Mammary epithelial cell (primary cell): ENCODE measurements at regions of chrX and their contacts with region 1.

Region 1: GRCh38 chrX:15564981-15565579 is 35.7 kb downstream of the ACE2 start:
- DNase-seq: peak; percentile 80
- H3K4me3 ChIP-seq: no peak overlapping the region
- H3K27ac ChIP-seq: peak overlapping the region; percentile 20
- H3K4me1 ChIP-seq: peaks cover 6% of the 10 kb centered on the region
- H3K27me3 ChIP-seq: no peaks in the 10 kb centered on the region
- CTCF ChIP-seq: peak; percentile 91 to 95

Region 2: DNA sequence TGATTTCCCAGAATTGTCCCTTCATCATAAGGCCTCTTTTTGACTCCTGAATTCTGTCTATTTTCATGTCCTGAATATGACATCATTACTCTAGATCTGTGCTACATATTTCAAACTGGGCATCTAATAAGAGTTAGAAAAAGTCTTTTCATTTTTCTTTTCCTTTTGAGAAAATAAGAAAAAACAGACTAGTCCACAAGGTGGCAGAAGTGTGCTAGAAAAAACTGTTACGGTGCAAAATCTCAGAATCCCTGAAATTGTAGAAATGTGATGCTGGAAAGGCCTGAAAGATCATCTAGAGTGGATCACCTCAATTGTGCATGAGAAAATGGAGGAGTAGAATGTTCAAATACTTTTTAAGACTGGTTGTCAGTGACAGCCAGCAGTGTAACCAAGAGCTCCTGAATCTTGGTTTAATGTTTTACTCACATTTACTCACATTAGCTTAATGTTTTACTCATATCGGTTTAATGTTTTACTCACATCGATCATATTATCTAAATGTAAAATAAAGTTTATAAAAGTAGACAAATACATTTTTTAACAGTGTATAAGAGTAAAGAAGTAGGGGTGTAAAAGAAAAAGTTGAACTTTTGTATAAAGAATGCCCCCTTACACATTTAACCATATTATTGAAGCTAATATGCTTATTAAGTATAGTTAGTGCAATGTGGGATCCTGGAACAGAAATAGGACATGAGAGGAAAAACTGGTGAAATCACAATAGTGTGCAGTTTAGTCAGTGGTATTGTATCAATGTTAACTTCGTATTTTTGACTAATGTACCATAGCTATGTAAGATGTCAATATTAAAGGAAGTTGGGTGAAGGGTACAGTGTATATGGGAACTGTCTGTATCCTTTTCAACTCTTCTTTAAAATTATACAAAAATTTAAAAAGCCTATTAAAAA is 264.9 kb before region 1 on chrX:
- CTCF ChIA-PET with region 1: no interaction called
- dilution Hi-C with region 1: no loop called
- in situ Hi-C with region 1: no loop called
- intact Hi-C with region 1: loop called (anchors 1 kb)
- DNase-seq: no peak
- H3K4me3 ChIP-seq: no peak overlapping the region
- H3K27ac ChIP-seq: no peak overlapping the region
- H3K4me1 ChIP-seq: no peaks in the 10 kb centered on the region
- H3K27me3 ChIP-seq: no peaks in the 10 kb centered on the region
- CTCF ChIP-seq: peak; percentile 53 to 57

Region 3: DNA sequence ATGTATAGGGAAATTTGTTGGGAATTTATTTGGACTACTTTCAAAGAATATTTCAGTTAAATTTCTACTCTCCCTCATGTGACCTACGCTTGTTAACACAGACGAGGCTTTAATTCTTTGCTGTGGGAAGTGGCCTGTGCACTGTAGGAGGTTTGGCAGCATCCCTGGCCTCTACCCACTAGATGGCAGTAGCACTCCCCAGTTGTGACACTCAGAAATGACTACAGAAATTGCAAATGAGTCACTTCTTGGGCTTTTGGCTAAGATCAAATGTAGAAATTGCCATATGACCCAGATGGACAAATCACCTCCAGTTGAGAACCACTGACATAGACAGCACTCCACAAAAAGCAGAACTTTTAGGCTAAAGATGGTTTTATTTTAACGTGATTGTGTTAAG is 94.1 kb before region 1 on chrX:
- CTCF ChIA-PET with region 1: interaction called, 3 read pairs
- dilution Hi-C with region 1: no loop called
- in situ Hi-C with region 1: loop called in 1 of 2 experiments (anchors 5 kb)
- intact Hi-C with region 1: loop called (anchors 1 kb)
- DNase-seq: peak; percentile 68
- H3K4me3 ChIP-seq: no peak overlapping the region
- H3K27ac ChIP-seq: peak overlapping the region; percentile 40
- H3K4me1 ChIP-seq: peaks cover 33% of the 10 kb centered on the region
- H3K27me3 ChIP-seq: no peaks in the 10 kb centered on the region
- CTCF ChIP-seq: peak; percentile 89 to 90

Region 4: DNA sequence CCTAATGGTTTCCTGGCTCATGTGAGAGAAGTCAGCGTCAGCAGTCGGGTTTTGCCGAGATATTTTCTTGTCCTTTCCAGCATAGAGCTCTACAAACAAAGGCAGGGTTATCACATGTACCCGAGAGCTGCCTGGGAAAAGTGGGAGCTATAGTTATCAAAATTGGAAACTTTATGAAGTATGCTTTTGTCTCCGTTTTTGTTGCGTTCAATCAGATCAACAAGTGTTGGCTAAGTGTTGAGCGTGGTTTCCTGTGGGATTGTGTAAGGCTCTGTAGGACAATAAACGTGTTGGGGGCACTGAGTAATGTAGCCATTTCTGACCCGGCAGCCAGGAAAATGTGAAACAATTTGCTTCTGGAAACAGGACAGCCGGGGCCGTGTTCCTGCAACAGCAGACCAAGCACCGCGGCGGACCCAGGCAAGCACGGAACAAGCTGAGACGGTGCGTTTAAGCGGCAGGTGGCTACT is 64.5 kb before region 1 on chrX and contains the start of gene BMX:
- CTCF ChIA-PET with region 1: interaction called, 4 read pairs
- dilution Hi-C with region 1: no loop called
- in situ Hi-C with region 1: loop called (anchors 5 to 10 kb)
- intact Hi-C with region 1: loop called (anchors 1 kb)
- DNase-seq: no peak
- H3K4me3 ChIP-seq: no peak within 1 kb of the TSS
- H3K27ac ChIP-seq: no peak within 1 kb of the TSS
- H3K4me1 ChIP-seq: peaks cover 40% of the 10 kb centered on the region
- H3K27me3 ChIP-seq: no peaks in the 10 kb centered on the region
- CTCF ChIP-seq: no peak
- total RNA-seq, gene BMX: 0.33 to 0.49 TPM

Region 5: GRCh38 chrX:15674841-15675489 is 109.9 kb after region 1 on chrX:
- CTCF ChIA-PET with region 1: no interaction called
- dilution Hi-C with region 1: no loop called
- in situ Hi-C with region 1: no loop called
- intact Hi-C with region 1: loop called (anchors 1 kb)
- DNase-seq: peak; percentile 97
- H3K4me3 ChIP-seq: peak overlapping the region; percentile 59 to 90 (median 82)
- H3K27ac ChIP-seq: peak overlapping the region; percentile 97
- H3K4me1 ChIP-seq: peaks cover 20% of the 10 kb centered on the region
- H3K27me3 ChIP-seq: no peaks in the 10 kb centered on the region
- CTCF ChIP-seq: no peak

Region 6: GRCh38 chrX:16670998-16671397 is 1105.9 kb after region 1 on chrX:
- CTCF ChIA-PET with region 1: no interaction called
- dilution Hi-C with region 1: no loop called
- in situ Hi-C with region 1: no loop called
- intact Hi-C with region 1: loop called (anchors 2 kb)
- DNase-seq: peak; percentile 25
- H3K4me3 ChIP-seq: no peak overlapping the region
- H3K27ac ChIP-seq: no peak overlapping the region
- H3K4me1 ChIP-seq: no peaks in the 10 kb centered on the region
- H3K27me3 ChIP-seq: no peaks in the 10 kb centered on the region
- CTCF ChIP-seq: peak; percentile 41 to 53